Tibial artery (tissue), 4 donors: ENCODE measurements at regions of chr2 and their contacts with region 1.

Region 1: DNA sequence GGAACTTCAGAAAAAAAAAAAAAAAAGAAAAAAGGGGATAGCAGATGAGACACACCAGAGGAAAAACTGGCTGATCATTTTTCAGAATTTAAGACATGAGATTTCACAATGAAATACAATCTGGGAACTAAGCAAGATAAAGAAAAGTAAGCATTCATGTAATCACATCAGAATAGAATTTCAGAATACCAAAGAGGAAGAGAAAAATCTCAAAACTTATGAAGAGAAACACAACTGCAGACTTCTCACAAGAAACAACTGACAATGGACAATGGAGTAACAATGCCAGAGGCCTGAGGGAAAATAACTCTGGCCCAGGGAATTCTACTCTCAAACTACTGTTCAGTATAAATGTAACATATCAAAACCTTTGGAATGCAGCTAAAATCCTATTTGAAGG is 13.2 kb upstream of the RRM2 start:
- DNase-seq: no peak
- H3K4me3 ChIP-seq: no peak overlapping the region
- H3K27ac ChIP-seq: no peak overlapping the region
- H3K4me1 ChIP-seq: no peaks in the 10 kb centered on the region
- H3K27me3 ChIP-seq: no peaks in the 10 kb centered on the region
- CTCF ChIP-seq: no peak

Region 2: GRCh38 chr2:10064932-10065772 is 44.2 kb before region 1 on chr2:
- intact Hi-C with region 1: loop called (anchors 5 kb)
- DNase-seq: no peak
- H3K4me3 ChIP-seq: no peak overlapping the region
- H3K27ac ChIP-seq: no peak overlapping the region
- H3K4me1 ChIP-seq: no peaks in the 10 kb centered on the region
- H3K27me3 ChIP-seq: no peaks in the 10 kb centered on the region
- CTCF ChIP-seq: no peak